ENCODE measurements at regions of chr5 and their contacts with region 1.

Region 1: DNA sequence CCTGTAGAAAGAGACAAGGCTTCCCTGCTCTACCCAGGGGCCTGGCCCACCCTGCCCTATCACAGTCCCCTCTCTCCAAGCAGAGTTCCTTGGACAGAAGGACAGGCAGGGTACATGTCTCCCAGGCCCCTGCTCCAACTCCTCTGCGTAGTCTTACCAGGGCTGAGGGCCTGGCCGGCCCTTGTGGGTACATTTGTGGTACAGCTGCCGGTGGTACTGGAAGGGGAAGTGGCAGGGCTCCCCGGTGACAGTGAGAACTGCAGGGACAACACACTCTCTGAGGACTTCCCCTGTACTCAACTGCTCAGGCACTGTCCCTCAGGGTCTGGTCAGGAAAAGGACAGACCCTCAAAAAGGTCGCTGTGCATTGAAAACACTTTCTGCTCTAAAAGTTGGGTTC is 3.6 kb downstream of the F12 start:
- DNase-seq: no peak
- H3K4me3 ChIP-seq: no peak overlapping the region
- H3K27ac ChIP-seq: no peak overlapping the region
- H3K4me1 ChIP-seq: peaks cover 0 to 27% (median 0%) of the 10 kb centered on the region in 3 donors
- H3K27me3 ChIP-seq: peaks cover 19% of the 10 kb centered on the region
- CTCF ChIP-seq: no peak

Region 2: GRCh38 chr5:177029498-177029897 is 376.3 kb before region 1 on chr5:
- intact Hi-C with region 1: no loop called
- DNase-seq: no peak
- H3K4me3 ChIP-seq: no peak overlapping the region
- H3K27ac ChIP-seq: no peak overlapping the region
- H3K4me1 ChIP-seq: no peaks in the 10 kb centered on the region
- H3K27me3 ChIP-seq: no peaks in the 10 kb centered on the region
- CTCF ChIP-seq: no peak

Region 3: DNA sequence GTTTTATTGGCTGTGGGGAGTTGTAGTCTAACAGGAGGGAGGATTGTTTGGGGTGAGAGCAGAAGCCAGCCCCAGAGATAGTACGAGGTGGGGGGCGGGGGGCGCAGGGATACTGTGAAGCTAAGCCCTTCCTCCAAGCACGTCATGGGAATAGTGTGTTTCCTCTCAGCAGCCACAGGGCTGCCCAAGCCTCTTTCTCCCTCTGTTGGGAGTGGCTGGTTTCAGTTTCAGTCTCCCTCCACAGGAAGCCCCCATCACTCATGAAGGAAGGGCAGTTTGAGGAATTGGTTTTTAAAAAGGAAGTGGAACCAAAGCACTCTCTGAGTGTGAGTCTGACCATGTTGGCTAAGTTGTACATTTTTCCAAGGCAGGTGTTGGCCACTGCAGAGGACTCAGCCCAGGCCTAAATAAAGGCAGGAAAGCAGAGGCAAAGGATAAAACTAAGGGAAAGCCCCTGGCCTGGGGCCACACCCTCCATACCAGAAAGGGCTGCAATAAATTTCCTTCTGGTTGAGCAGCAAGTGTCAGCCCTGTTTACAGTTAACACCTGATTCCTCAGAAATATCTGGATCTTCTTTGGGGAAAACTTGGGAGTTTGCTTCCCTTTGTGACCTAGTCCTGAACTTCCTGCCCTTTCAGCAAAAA is 105.4 kb before region 1 on chr5:
- intact Hi-C with region 1: no loop called
- DNase-seq: peak in 4 of 5 donors; percentile 42 to 79 (median 58)
- H3K4me3 ChIP-seq: no peak overlapping the region
- H3K27ac ChIP-seq: peak overlapping the region; percentile 47 to 52
- H3K4me1 ChIP-seq: peaks cover 0 to 33% (median 4%) of the 10 kb centered on the region in 3 donors
- H3K27me3 ChIP-seq: no peaks in the 10 kb centered on the region
- CTCF ChIP-seq: no peak

Region 4: DNA sequence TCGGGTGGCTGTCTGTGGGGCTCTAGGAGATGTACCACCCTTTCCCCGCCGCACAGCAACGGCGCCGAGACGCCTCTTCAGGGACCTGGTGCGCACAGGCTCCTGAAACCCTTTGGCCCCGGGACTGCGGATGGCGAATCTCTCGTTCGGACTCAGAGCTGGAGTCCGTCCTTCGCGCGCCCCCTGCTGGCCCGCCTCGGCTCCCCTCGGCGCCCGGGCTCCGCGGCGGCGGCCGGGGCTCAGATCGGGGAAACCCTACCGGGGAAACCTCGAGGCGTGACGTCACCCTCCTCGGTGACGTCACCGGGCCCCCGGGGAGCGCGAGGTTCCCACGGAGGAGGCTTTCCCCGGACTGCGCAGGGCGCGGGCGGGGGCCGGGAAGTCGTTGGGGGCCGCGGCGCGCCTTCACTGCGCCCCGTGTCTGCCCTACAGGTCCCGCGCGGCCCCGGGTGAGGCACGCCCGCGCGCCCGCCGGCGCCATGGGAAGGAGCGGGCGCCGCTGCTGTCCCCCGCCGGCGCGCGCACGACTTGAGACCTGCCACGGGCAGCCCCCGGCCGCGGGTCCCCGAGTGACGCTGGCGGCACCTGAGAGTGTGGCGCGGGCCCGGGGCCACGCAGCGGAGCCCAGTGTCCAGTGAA is 48.7 kb after region 1 on chr5:
- intact Hi-C with region 1: loop called (anchors 5 kb)
- DNase-seq: peak; percentile 94 to 97 (median 95)
- H3K4me3 ChIP-seq: peak overlapping the region in 2 of 3 donors; percentile 46 to 59
- H3K27ac ChIP-seq: peak overlapping the region in 1 of 2 donors; percentile 11
- H3K4me1 ChIP-seq: peaks cover 0 to 13% (median 0%) of the 10 kb centered on the region in 3 donors
- H3K27me3 ChIP-seq: no peaks in the 10 kb centered on the region
- CTCF ChIP-seq: peak; percentile 97

Measured in kidney (tissue), 22 donors.